ENCODE measurements at regions of chr5 and their contacts with region 1.

Region 1: GRCh38 chr5:79133657-79134451 is 22.2 kb downstream of the BHMT start:
- DNase-seq: peak; percentile 61
- CTCF ChIP-seq: peak; percentile 78

Region 2: GRCh38 chr5:79020861-79021561 is 112.8 kb before region 1 on chr5:
- CTCF ChIA-PET with region 1: interaction called, 198 read pairs
- POLR2A ChIA-PET with region 1: no interaction called
- DNase-seq: peak; percentile 34
- CTCF ChIP-seq: peak; percentile 82

Region 3: GRCh38 chr5:79081779-79082178 is 52.1 kb before region 1 on chr5:
- CTCF ChIA-PET with region 1: interaction called, 14 read pairs
- POLR2A ChIA-PET with region 1: no interaction called
- DNase-seq: no peak
- CTCF ChIP-seq: no peak

Region 4: GRCh38 chr5:79151942-79152671 is 18.3 kb after region 1 on chr5:
- CTCF ChIA-PET with region 1: interaction called, 29 read pairs
- POLR2A ChIA-PET with region 1: no interaction called
- DNase-seq: no peak
- CTCF ChIP-seq: no peak

Region 5: DNA sequence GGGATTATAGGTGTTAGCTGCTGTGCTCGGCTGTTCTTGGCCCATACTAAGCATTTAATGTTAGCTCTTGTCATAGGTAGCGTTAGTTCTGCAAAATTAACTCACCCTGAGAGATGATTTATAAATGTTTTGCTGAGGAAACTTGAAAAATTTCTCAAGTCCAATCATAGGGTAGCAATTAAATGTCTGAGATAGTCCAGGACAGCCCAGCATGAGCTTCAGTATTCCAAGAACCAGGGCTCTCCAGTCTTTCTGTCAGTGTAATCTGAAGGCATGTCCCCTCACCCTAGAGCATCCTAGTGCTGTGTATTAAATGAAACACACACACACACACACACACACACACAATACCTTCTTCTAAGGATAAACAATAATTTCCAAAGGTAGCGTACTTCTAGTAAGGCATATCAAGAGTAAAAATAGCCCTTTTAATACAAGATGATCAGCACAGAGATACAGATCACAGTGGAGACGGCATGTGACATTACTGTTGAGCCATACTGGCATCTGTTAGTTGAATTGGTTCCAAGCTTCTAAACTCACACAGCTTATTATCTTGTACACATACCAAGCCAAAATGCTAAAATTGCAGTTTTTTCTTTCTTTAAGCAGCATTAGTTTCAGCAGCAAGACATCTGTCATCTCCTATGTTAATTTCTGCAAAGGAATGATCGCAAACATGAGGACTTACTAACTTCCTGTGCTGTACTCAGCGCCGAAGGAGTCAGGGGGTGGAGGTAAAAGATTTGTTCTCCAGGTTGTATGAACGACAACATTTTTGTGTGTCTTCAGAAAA is 55.8 kb after region 1 on chr5:
- CTCF ChIA-PET with region 1: interaction called, 12 read pairs
- POLR2A ChIA-PET with region 1: no interaction called
- DNase-seq: no peak
- CTCF ChIP-seq: no peak

Region 6: GRCh38 chr5:79535477-79536192 is 401.8 kb after region 1 on chr5:
- CTCF ChIA-PET with region 1: interaction called, 22 read pairs
- POLR2A ChIA-PET with region 1: no interaction called
- DNase-seq: no peak
- CTCF ChIP-seq: no peak

Measured in GM10248 (cell line).